ENCODE measurements at regions of chr13 and their contacts with region 1.

Region 1: DNA sequence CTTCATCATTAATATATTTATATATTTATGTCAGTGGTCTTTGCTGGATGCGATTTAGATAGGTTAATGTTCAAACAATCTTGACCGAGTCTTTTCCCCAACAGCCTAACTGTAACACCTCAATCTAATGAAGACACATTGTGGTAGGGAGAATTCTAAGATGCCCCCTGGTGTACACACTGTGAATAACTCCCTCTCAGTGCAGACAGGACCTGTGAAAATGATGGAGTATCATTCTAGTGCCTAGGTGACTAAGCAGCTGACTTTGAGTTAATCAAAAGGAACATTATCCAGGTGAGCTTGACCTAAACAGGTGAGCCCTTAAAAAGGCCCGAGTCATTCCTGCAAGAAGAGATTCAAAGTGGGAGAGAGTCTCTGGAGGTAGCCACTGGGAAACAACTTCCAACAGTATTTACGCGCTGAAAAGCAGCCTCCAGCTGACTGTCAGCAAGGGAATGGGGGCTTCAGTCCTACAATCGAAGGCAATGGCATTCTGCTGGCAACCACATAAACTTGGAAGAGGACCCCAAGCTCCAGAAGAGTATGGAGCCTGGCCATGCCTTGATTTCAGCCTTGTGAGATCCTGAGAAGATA is 28.0 kb upstream of the KBTBD7 start:
- DNase-seq: peak; percentile 50 to 68
- H3K4me3 ChIP-seq: no peak overlapping the region
- H3K4me3 Mint-ChIP-seq: no peak overlapping the region
- H3K27ac Mint-ChIP-seq: no peak overlapping the region
- H3K4me1 ChIP-seq: peaks cover 14% of the 10 kb centered on the region
- H3K4me1 Mint-ChIP-seq: peaks cover 8% of the 10 kb centered on the region
- H3K27me3 ChIP-seq: no peaks in the 10 kb centered on the region
- H3K27me3 Mint-ChIP-seq: no peaks in the 10 kb centered on the region
- CTCF ChIP-seq: peak; percentile 70 to 76

Region 2: DNA sequence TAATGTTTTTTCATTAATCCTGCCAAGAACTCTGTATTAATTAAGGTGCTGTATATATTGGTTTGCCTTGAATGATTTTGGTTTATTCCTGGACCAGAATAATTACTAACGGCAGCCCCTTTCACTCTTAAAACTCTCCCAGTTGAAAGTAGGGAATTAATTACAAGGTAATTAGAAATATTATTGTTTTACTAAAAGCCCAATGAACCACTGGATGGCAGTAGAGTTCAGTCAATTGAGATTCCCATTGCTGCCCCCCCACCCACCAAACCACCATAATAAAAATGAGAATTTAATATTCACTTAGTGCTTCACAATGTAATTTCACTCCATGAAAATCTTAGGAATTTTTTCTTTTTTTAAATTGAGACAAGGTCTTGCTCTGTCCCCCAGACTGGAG is 147.3 kb before region 1 on chr13:
- CTCF ChIA-PET with region 1: no interaction called
- POLR2A ChIA-PET with region 1: interaction called, 12 read pairs
- intact Hi-C with region 1: loop called (anchors 1 kb)
- DNase-seq: peak in 1 of 2 experiments; percentile 41
- H3K4me3 ChIP-seq: no peak overlapping the region
- H3K4me3 Mint-ChIP-seq: no peak overlapping the region
- H3K27ac Mint-ChIP-seq: no peak overlapping the region
- H3K4me1 ChIP-seq: no peaks in the 10 kb centered on the region
- H3K4me1 Mint-ChIP-seq: no peaks in the 10 kb centered on the region
- H3K27me3 ChIP-seq: no peaks in the 10 kb centered on the region
- H3K27me3 Mint-ChIP-seq: no peaks in the 10 kb centered on the region
- CTCF ChIP-seq: peak; percentile 36 to 68

Region 3: DNA sequence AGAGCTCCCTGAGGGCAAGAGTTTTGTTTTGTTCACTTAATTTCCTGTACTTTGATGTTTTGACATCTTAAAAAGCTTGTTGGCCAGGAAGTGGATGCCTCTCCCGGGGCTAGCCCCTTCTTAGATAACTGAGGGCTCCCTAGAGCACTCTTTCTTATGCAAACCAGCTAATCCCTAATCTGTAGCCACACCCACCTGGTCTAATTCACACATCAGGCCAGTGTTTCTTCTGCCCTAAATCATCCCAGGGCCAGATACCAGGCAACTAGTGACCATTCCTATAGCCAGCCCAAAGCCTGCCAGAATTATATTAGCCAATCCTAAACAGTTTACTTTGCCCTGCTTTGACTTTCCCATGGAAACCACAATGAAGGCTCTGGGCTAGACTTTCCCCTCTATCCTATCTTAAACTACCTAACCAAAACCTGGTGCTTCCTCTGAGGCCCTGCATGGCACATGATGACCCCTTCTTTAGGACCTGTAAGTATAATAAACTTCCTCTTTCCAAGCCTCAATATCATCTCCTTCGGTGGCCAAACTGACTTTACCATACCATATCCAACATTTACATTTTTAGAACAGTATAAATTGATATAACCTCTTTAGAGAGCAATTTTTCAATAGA is 136.3 kb before region 1 on chr13:
- CTCF ChIA-PET with region 1: interaction called, 3 read pairs
- POLR2A ChIA-PET with region 1: no interaction called
- intact Hi-C with region 1: loop called (anchors 5 kb)
- DNase-seq: no peak
- H3K4me3 ChIP-seq: no peak overlapping the region
- H3K4me3 Mint-ChIP-seq: no peak overlapping the region
- H3K27ac Mint-ChIP-seq: no peak overlapping the region
- H3K4me1 ChIP-seq: no peaks in the 10 kb centered on the region
- H3K4me1 Mint-ChIP-seq: no peaks in the 10 kb centered on the region
- H3K27me3 ChIP-seq: no peaks in the 10 kb centered on the region
- H3K27me3 Mint-ChIP-seq: no peaks in the 10 kb centered on the region
- CTCF ChIP-seq: no peak

Region 4: GRCh38 chr13:41117869-41118268 is 104.5 kb before region 1 on chr13:
- CTCF ChIA-PET with region 1: no interaction called
- POLR2A ChIA-PET with region 1: no interaction called
- intact Hi-C with region 1: no loop called
- DNase-seq: no peak
- H3K4me3 ChIP-seq: no peak overlapping the region
- H3K4me3 Mint-ChIP-seq: no peak overlapping the region
- H3K27ac Mint-ChIP-seq: no peak overlapping the region
- H3K4me1 ChIP-seq: no peaks in the 10 kb centered on the region
- H3K4me1 Mint-ChIP-seq: no peaks in the 10 kb centered on the region
- H3K27me3 ChIP-seq: no peaks in the 10 kb centered on the region
- H3K27me3 Mint-ChIP-seq: no peaks in the 10 kb centered on the region
- CTCF ChIP-seq: no peak

Region 5: DNA sequence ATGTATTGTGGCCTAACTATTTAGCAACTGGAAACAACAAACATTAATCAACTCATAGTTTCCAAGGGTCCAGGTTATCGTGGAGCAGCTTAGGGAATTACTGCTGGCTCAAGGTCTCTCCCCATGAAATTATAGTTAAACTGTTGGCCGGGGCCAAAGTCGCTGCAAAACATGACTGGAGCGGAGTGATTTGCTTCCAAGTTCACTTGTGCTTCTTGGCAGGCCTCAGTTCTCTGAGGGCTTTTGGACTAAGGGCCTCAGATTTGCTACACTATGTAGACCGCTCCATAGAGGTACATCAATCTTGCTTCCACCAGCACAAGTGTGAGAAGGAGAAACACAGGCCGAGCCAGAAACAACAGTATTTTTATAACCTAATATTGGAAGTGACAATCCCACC is 18.5 kb before region 1 on chr13:
- CTCF ChIA-PET with region 1: no interaction called
- POLR2A ChIA-PET with region 1: no interaction called
- intact Hi-C with region 1: no loop called
- DNase-seq: no peak
- H3K4me3 ChIP-seq: no peak overlapping the region
- H3K4me3 Mint-ChIP-seq: no peak overlapping the region
- H3K27ac Mint-ChIP-seq: no peak overlapping the region
- H3K4me1 ChIP-seq: no peaks in the 10 kb centered on the region
- H3K4me1 Mint-ChIP-seq: no peaks in the 10 kb centered on the region
- H3K27me3 ChIP-seq: no peaks in the 10 kb centered on the region; the same call in 1 of the 2 replicates
- H3K27me3 Mint-ChIP-seq: no peaks in the 10 kb centered on the region
- CTCF ChIP-seq: no peak

Region 6: GRCh38 chr13:41345914-41346589 is 123.7 kb after region 1 on chr13:
- CTCF ChIA-PET with region 1: no interaction called
- POLR2A ChIA-PET with region 1: no interaction called
- intact Hi-C with region 1: no loop called
- DNase-seq: no peak
- H3K4me3 ChIP-seq: no peak overlapping the region
- H3K4me3 Mint-ChIP-seq: no peak overlapping the region
- H3K27ac Mint-ChIP-seq: no peak overlapping the region
- H3K4me1 ChIP-seq: no peaks in the 10 kb centered on the region
- H3K4me1 Mint-ChIP-seq: no peaks in the 10 kb centered on the region
- H3K27me3 ChIP-seq: no peaks in the 10 kb centered on the region
- H3K27me3 Mint-ChIP-seq: no peaks in the 10 kb centered on the region
- CTCF ChIP-seq: no peak

Region 7: DNA sequence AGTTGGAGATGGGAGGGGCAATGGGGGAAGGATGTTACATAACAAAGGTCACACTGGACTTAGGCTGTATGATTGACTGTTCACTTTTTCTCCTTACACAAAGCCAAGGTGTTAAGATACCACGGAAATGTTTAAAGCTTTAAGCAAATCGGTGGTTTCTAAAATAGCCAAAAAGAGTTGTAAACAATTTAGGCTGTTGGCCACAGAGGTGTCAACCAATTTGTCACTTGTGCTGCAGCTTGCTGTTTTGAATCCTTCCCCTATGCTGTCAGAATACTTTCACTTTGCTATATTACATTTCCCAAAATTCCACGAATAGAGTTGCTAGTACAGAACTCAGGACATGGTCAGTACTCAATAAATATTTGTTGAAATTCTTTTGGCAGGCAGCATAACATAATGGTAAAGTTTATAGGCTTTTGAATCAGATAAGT is 589.2 kb after region 1 on chr13:
- CTCF ChIA-PET with region 1: no interaction called
- POLR2A ChIA-PET with region 1: no interaction called
- intact Hi-C with region 1: no loop called
- DNase-seq: no peak
- H3K4me3 ChIP-seq: no peak overlapping the region
- H3K4me3 Mint-ChIP-seq: no peak overlapping the region
- H3K27ac Mint-ChIP-seq: no peak overlapping the region
- H3K4me1 ChIP-seq: no peaks in the 10 kb centered on the region; the same call in 1 of the 2 replicates
- H3K4me1 Mint-ChIP-seq: no peaks in the 10 kb centered on the region
- H3K27me3 ChIP-seq: no peaks in the 10 kb centered on the region
- H3K27me3 Mint-ChIP-seq: no peaks in the 10 kb centered on the region
- CTCF ChIP-seq: no peak